MCF 10A (cell line): ENCODE measurements at regions of chr14 and their contacts with region 1.

Region 1: DNA sequence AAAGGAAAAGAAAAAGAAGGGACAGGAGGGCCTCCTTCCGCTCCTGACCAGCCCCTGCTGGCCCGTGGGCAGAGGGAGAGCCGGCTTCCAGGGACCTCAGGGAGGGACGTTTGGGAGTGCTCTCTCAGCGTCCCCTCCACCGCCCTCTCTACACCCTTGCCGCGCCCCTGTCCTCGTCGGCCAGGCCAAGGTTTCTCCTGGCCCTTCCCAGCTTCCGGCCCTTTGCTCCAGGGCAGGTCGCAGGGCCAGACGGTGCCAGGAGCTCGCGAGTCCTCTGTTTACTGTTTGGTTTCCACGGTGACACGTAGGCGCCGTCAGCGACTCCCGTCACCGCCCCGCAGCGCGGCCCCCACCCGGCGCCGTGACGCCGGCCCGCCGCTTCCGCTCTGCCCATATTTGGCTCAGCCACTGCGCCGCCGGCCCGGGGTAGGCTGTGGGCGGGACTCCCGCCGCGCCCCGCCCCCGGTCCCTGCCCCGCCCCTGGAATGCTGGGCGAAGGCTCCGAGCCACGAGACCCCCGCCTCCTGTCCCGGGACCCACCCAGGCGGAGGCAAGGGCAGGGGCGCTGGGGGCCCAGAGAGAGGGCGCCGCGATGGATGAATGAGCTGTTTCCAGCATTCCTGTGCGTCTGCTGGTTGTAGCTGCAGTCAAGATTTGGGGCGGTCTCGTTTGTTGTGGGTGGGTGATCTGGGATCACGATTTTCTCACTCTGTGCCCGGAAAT is 15.5 kb downstream of the FOS start:
- DNase-seq: peak; percentile 96
- H3K4me3 Mint-ChIP-seq: peak overlapping the region; percentile 67
- H3K27ac Mint-ChIP-seq: peak overlapping the region; percentile 71
- H3K4me1 Mint-ChIP-seq: peaks cover 22% of the 10 kb centered on the region
- H3K27me3 Mint-ChIP-seq: no peaks in the 10 kb centered on the region
- CTCF ChIP-seq: no peak

Region 2: GRCh38 chr14:75002392-75003249 is 291.5 kb before region 1 on chr14 and contains the start of gene EIF2B2:
- CTCF ChIA-PET with region 1: no interaction called
- POLR2A ChIA-PET with region 1: no interaction called
- intact Hi-C with region 1: no loop called
- DNase-seq: peak; percentile 97
- H3K4me3 Mint-ChIP-seq: peak within 1 kb of the TSS; percentile 94
- H3K27ac Mint-ChIP-seq: peak within 1 kb of the TSS; percentile 72
- H3K4me1 Mint-ChIP-seq: peaks cover 16% of the 10 kb centered on the region
- H3K27me3 Mint-ChIP-seq: no peaks in the 10 kb centered on the region
- CTCF ChIP-seq: no peak
- total RNA-seq, gene EIF2B2: 53.8 and 57.9 TPM in 2 replicates

Region 3: DNA sequence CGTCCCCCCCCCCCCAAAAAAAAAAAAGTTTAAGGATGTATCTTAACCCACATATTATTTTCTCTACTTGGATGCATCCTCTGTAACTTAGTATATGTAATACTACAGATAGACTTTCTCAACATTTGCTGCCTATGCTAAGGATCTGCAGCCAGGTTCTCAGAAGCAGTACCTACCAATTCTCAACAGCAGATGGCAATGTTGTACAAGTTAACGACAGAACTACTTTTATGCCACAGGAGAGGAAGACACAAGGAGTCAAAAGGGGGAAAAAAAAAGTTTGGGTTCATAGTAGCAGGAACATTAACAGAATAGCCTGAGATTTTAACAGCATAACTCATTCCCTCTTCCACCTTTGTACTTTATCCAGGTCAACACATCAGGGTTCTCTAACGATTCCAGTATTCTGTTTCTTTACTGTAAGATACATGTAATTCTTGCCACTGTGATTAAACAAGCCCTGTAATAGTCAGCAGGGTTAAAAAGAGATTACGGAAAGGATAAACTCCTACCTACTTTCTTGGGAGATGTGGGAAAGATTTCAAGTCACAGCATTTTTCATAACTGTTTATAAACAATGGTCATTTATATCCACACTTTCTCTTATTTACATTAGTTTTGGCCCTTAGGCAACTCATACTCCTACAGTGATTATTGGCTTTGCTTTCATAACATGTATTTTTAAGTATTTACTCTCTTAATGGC is 161.5 kb before region 1 on chr14:
- CTCF ChIA-PET with region 1: interaction called, 192 read pairs
- POLR2A ChIA-PET with region 1: interaction called, 274 read pairs
- intact Hi-C with region 1: loop called (anchors 1 kb)
- DNase-seq: peak; percentile 83
- H3K4me3 Mint-ChIP-seq: no peak overlapping the region
- H3K27ac Mint-ChIP-seq: peak overlapping the region; percentile 77
- H3K4me1 Mint-ChIP-seq: peaks cover 33% of the 10 kb centered on the region
- H3K27me3 Mint-ChIP-seq: no peaks in the 10 kb centered on the region
- CTCF ChIP-seq: peak; percentile 67

Region 4: GRCh38 chr14:75158843-75159614 is 135.1 kb before region 1 on chr14:
- CTCF ChIA-PET with region 1: no interaction called
- POLR2A ChIA-PET with region 1: interaction called, 11 read pairs
- intact Hi-C with region 1: no loop called
- DNase-seq: no peak
- H3K4me3 Mint-ChIP-seq: no peak overlapping the region
- H3K27ac Mint-ChIP-seq: peak overlapping the region; percentile 36
- H3K4me1 Mint-ChIP-seq: peaks cover 31% of the 10 kb centered on the region
- H3K27me3 Mint-ChIP-seq: no peaks in the 10 kb centered on the region
- CTCF ChIP-seq: no peak

Region 5: DNA sequence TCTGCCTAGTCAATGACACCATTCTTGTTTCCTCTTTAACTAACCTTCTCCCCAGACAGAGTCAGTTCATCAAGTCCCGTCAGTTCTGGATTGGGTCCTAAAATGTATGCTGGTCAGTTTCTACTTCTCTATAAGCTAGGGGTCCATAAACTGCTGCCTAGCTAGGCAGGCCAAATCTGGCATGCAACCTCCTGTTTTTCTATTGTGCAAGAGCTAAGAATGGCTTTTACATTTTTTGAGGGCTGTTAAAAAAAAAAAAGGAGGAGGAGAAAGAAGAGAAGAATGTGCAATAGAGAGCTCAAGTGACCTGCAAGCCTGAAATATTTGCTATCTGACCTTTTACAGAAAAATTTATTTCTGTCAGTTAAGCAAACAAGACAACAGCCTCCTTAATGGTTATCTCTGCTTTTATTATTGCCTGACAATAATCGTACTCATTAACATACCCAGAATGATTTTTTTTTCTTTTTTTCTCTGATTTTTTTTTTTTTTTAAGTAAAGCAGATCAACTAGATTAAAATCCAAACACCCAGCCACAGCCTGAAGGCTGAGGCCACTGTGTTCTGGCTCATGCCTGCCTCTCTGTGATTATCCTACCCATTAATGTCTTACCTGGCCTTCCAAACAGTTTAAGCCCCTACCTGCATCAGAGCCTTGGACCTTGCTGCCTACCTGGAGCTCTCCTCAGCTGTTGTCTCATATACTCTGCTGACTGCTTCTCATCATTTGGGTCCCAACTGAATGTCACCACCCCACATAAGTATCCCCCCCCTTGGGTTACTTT is 111.0 kb before region 1 on chr14:
- CTCF ChIA-PET with region 1: interaction called, 3 read pairs
- POLR2A ChIA-PET with region 1: interaction called, 12 read pairs
- intact Hi-C with region 1: no loop called
- DNase-seq: peak; percentile 71
- H3K4me3 Mint-ChIP-seq: peak overlapping the region; percentile 21
- H3K27ac Mint-ChIP-seq: peak overlapping the region; percentile 57
- H3K4me1 Mint-ChIP-seq: peaks cover 20% of the 10 kb centered on the region
- H3K27me3 Mint-ChIP-seq: no peaks in the 10 kb centered on the region
- CTCF ChIP-seq: no peak

Region 6: GRCh38 chr14:75242546-75243273 is 51.4 kb before region 1 on chr14:
- CTCF ChIA-PET with region 1: interaction called, 10 read pairs
- POLR2A ChIA-PET with region 1: interaction called, 30 read pairs
- intact Hi-C with region 1: no loop called
- DNase-seq: peak; percentile 95
- H3K4me3 Mint-ChIP-seq: peak overlapping the region; percentile 2
- H3K27ac Mint-ChIP-seq: peak overlapping the region; percentile 57
- H3K4me1 Mint-ChIP-seq: peaks cover 10% of the 10 kb centered on the region
- H3K27me3 Mint-ChIP-seq: no peaks in the 10 kb centered on the region
- CTCF ChIP-seq: no peak

Region 7: DNA sequence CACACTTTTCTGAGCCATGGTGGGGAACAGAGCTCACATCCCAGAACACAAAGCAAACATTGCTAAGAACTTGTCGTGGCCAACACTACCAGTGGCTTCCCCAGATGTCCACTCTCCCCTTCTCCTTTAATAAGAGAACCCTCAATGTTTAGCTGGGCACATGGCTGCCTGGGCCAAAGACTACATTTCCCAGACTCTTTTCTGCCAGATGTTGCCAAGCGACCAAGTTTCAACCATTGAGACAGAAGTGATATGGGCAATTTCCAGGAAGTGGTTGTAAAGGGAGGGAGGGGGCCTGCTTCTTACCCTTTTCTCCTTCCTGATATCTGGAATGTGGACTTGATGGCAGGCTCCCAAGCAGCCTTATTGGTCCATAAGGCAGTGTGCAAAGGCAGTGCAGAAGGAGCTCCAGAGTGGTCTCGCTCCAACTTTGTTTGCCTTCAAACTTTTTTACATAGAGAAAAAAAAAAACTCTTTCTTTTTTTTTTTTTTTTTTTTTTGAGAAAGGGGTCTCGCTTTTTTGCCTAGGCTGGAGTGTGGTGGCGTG is 108.9 kb after region 1 on chr14:
- CTCF ChIA-PET with region 1: no interaction called
- POLR2A ChIA-PET with region 1: no interaction called
- intact Hi-C with region 1: no loop called
- DNase-seq: no peak
- H3K4me3 Mint-ChIP-seq: no peak overlapping the region
- H3K27ac Mint-ChIP-seq: no peak overlapping the region
- H3K4me1 Mint-ChIP-seq: peaks cover 25% of the 10 kb centered on the region
- H3K27me3 Mint-ChIP-seq: no peaks in the 10 kb centered on the region
- CTCF ChIP-seq: no peak